ENCODE measurements at regions of chr6 and their contacts with region 1.

Region 1: GRCh38 chr6:110873981-110874879 is at the start of gene AMD1:
- DNase-seq: peak; percentile 97
- H3K4me3 Mint-ChIP-seq: peak within 1 kb of the TSS; percentile 95
- H3K27ac Mint-ChIP-seq: peak within 1 kb of the TSS; percentile 99
- H3K4me1 Mint-ChIP-seq: peaks cover 31% of the 10 kb centered on the region
- H3K27me3 Mint-ChIP-seq: no peaks in the 10 kb centered on the region
- total RNA-seq, gene AMD1: 76.5 to 103 TPM

Region 2: GRCh38 chr6:110656492-110656891 is 217.7 kb before region 1 on chr6:
- CTCF ChIA-PET with region 1: no interaction called
- POLR2A ChIA-PET with region 1: no interaction called
- DNase-seq: no peak
- H3K4me3 Mint-ChIP-seq: no peak overlapping the region
- H3K27ac Mint-ChIP-seq: no peak overlapping the region
- H3K4me1 Mint-ChIP-seq: peaks cover 5% of the 10 kb centered on the region
- H3K27me3 Mint-ChIP-seq: no peaks in the 10 kb centered on the region

Region 3: GRCh38 chr6:110815217-110816109 is 58.8 kb before region 1 on chr6 and contains the start of gene CDK19:
- CTCF ChIA-PET with region 1: interaction called, 6 read pairs
- POLR2A ChIA-PET with region 1: interaction called, 89 read pairs
- DNase-seq: peak; percentile 99
- H3K4me3 Mint-ChIP-seq: peak within 1 kb of the TSS; percentile 99
- H3K27ac Mint-ChIP-seq: peak within 1 kb of the TSS; percentile 99
- H3K4me1 Mint-ChIP-seq: peaks cover 41% of the 10 kb centered on the region
- H3K27me3 Mint-ChIP-seq: no peaks in the 10 kb centered on the region
- total RNA-seq, gene CDK19: 26.5 to 27.3 TPM

Region 4: GRCh38 chr6:110885526-110885925 is 11.3 kb after region 1 on chr6:
- CTCF ChIA-PET with region 1: interaction called, 10 read pairs
- POLR2A ChIA-PET with region 1: interaction called, 5 read pairs
- DNase-seq: no peak
- H3K4me3 Mint-ChIP-seq: no peak overlapping the region
- H3K27ac Mint-ChIP-seq: no peak overlapping the region
- H3K4me1 Mint-ChIP-seq: peaks cover 66% of the 10 kb centered on the region
- H3K27me3 Mint-ChIP-seq: no peaks in the 10 kb centered on the region

Region 5: DNA sequence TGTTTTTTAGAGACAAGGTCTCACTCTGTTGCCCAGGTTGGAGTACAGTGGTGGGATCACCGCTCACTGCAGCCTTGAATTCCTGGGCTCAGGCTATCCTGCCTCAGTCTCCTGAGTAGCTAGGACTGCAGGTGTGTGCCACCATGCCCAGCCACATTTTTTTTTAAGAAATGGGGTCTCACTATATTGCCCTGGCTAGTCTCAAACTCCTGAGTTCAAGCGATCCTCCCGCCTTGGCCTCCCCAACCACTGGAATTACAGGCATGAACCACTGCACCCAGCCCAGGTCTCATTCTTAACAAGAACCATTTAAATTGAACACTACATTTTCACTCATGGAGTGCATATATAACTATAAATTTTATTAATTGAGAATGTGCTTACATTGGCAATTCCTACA is 128.1 kb after region 1 on chr6:
- CTCF ChIA-PET with region 1: no interaction called
- POLR2A ChIA-PET with region 1: no interaction called
- DNase-seq: no peak
- H3K4me3 Mint-ChIP-seq: no peak overlapping the region
- H3K27ac Mint-ChIP-seq: no peak overlapping the region
- H3K4me1 Mint-ChIP-seq: no peaks in the 10 kb centered on the region
- H3K27me3 Mint-ChIP-seq: no peaks in the 10 kb centered on the region

Region 6: GRCh38 chr6:111061508-111061907 is 187.3 kb after region 1 on chr6:
- CTCF ChIA-PET with region 1: no interaction called
- POLR2A ChIA-PET with region 1: no interaction called
- DNase-seq: no peak
- H3K4me3 Mint-ChIP-seq: no peak overlapping the region
- H3K27ac Mint-ChIP-seq: no peak overlapping the region
- H3K4me1 Mint-ChIP-seq: peaks cover 2% of the 10 kb centered on the region
- H3K27me3 Mint-ChIP-seq: peaks cover 2% of the 10 kb centered on the region